AG04450 (cell line): ENCODE measurements at regions of chr6 and their contacts with region 1.

Region 1: GRCh38 chr6:116511404-116512110 is at the start of gene CALHM5:
- DNase-seq: peak; percentile 78
- H3K4me3 ChIP-seq: peak within 1 kb of the TSS; percentile 66
- H3K27ac ChIP-seq: peak within 1 kb of the TSS; percentile 94
- H3K27me3 ChIP-seq: no peaks in the 10 kb centered on the region
- CTCF ChIP-seq: peak; percentile 83
- polyA plus RNA-seq, gene CALHM5: 6.8 and 7.7 TPM in 2 replicates

Region 2: DNA sequence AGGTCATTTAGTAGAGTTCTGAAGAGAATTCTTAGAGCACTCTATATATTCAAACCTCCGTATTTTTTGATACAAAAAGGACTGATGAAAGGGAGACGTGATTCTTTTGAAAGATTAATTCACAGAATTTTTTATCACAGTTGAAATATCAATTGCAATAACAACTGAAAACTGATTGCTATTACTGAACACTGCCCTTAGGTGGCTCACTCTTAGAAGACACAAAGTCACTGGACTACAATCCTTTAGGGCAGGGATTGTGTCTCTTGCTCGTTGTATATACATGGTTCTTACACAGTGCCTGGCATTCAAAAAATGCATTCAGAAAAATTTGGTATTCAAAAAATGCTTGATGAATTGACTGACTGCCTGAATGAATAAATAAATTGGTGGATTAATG is 67.5 kb before region 1 on chr6:
- CTCF ChIA-PET with region 1: interaction called, 12 read pairs
- POLR2A ChIA-PET with region 1: interaction called, 9 read pairs
- DNase-seq: no peak
- H3K4me3 ChIP-seq: no peak overlapping the region
- H3K27ac ChIP-seq: no peak overlapping the region
- H3K27me3 ChIP-seq: no peaks in the 10 kb centered on the region
- CTCF ChIP-seq: peak; percentile 57

Region 3: DNA sequence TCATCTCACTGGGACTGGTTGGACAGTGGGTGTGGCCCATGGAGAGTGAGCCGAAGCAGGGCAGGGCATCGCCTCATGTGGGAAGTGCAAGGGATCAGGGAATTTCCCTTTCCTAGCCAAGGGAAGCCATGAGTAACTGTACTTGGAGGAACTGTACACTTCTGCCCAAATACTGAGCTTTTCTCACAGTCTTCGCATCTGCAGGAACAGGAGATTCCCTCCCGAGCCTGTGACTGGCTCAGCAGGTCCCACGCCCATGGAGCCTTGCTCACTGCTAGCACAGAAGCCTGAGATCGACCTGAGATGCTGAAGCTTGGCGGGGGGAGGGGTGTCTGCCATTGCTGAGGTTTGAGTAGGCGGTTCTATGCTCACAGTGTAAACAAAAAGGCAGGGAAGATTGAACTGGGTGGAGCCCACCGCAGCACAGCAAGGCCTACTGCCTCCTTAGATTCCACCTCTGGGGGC is 10.6 kb before region 1 on chr6:
- CTCF ChIA-PET with region 1: interaction called, 51 read pairs
- POLR2A ChIA-PET with region 1: interaction called, 8 read pairs
- DNase-seq: no peak
- H3K4me3 ChIP-seq: no peak overlapping the region
- H3K27ac ChIP-seq: no peak overlapping the region
- H3K27me3 ChIP-seq: no peaks in the 10 kb centered on the region
- CTCF ChIP-seq: no peak

Region 4: GRCh38 chr6:116522879-116523278 is 11.3 kb after region 1 on chr6:
- CTCF ChIA-PET with region 1: interaction called, 17 read pairs
- POLR2A ChIA-PET with region 1: no interaction called
- DNase-seq: no peak
- H3K4me3 ChIP-seq: no peak overlapping the region
- H3K27ac ChIP-seq: no peak overlapping the region
- H3K27me3 ChIP-seq: no peaks in the 10 kb centered on the region
- CTCF ChIP-seq: no peak

Region 5: DNA sequence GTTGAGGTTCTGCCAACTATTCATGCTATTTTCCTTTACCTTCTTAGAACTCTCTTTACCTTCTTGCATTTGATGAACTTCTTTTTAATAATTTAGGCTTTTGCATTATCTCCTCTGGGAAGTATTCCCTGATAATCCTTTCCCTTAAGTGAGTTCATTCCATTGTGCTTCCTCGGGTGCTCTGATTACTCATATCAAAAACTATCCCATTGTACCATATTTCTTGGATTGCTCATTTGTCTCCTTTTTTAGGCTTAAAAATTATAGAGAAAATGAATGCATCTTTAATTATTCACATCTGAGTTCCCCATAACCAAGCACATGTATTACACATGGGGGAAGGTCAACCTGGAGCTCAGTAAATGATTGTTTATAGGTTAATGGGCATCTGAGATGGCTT is 44.5 kb after region 1 on chr6:
- CTCF ChIA-PET with region 1: interaction called, 10 read pairs
- POLR2A ChIA-PET with region 1: no interaction called
- DNase-seq: no peak
- H3K4me3 ChIP-seq: no peak overlapping the region
- H3K27ac ChIP-seq: peak overlapping the region; percentile 49
- H3K27me3 ChIP-seq: no peaks in the 10 kb centered on the region
- CTCF ChIP-seq: no peak

Region 6: GRCh38 chr6:116580198-116580597 is 68.6 kb after region 1 on chr6:
- CTCF ChIA-PET with region 1: no interaction called
- POLR2A ChIA-PET with region 1: no interaction called
- DNase-seq: no peak
- H3K4me3 ChIP-seq: no peak overlapping the region
- H3K27ac ChIP-seq: no peak overlapping the region
- H3K27me3 ChIP-seq: no peaks in the 10 kb centered on the region
- CTCF ChIP-seq: no peak